ENCODE measurements at regions of chr2 and their contacts with region 1.

Region 1: GRCh38 chr2:215556979-215557378 is 121.1 kb upstream of the FN1 start:
- DNase-seq: no peak

Region 2: GRCh38 chr2:214139630-214140284 is 1417.2 kb before region 1 on chr2:
- intact Hi-C with region 1: loop called in 1 of 2 experiments (anchors 5 kb)
- DNase-seq: no peak

Region 3: DNA sequence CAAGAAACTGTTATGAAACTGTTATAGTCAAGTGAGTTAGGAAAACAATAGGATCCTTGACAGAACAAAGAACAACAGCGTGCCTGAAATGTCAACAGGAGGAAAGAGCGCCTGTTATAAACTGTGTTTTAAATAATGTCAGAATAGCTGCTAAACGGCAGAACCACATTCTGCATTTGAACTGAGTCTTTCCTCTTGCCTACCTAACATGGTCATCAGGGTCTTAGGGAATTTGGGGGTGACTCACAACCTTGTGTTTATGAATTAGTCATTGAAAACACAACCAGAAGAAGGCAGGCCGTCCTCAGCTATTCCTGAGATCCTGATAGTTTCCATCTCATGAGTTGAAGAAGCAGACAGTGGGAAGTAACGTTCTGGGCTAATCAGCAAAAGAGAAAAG is 100.9 kb after region 1 on chr2:
- intact Hi-C with region 1: no loop called
- DNase-seq: no peak